ENCODE measurements at regions of chr4 and their contacts with region 1.

Region 1: DNA sequence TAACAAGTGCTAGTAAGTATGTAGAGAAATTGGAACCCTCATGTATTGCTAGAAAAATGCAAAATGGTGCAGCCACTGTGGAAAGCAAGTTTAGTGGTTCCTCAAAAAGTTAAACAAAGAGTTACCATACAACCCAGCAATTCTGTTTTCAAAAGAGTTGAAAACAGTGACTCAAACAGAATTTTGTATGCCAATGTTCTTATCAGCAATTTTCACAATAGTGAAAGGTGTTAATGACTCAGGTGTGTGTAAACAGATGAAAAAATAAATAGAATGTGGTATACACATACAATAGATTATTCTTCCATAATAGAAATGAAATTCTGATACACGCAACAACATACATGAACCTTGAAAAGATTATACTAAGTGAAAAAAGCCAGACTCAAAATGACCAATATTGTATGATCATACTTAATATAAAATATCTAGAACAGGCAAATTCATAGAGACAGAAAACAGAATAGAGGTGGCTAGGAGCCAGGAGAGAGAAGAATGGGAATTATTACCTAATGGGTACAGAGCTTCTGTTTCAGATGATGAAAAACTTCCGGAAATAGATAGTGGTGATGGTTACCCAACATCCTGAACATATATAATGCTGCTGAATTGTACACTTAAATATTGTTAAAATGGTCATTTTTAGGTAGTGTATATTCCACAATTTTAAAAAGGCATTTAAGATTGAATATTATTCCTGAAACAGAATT is 51.6 kb downstream of the WDFY3 start:
- H3K4me3 Mint-ChIP-seq: no peak overlapping the region
- H3K27ac Mint-ChIP-seq: no peak overlapping the region
- H3K4me1 Mint-ChIP-seq: peaks cover 34% of the 10 kb centered on the region
- H3K27me3 Mint-ChIP-seq: no peaks in the 10 kb centered on the region

Region 2: DNA sequence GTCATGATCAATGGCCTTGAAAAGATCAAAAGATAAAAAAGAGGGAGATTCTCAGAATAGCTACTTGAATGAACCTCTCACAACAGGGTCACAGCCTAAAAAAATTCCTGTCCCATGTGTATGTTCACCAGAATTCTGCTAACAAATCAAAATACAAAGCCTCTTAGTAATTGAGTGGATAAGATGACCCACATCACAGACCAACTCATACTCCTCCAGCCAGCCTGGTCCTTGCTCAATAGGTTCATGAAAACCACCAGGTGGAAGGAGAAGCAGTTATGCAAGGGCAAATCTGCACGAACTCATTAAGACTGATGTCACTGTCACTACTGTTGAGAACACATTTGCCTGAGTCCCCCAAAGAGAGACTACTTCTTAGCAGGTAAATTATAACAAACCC is 30.1 kb after region 1 on chr4:
- intact Hi-C with region 1: loop called (anchors 5 kb)
- H3K4me3 Mint-ChIP-seq: no peak overlapping the region
- H3K27ac Mint-ChIP-seq: no peak overlapping the region
- H3K4me1 Mint-ChIP-seq: peaks cover 24% of the 10 kb centered on the region
- H3K27me3 Mint-ChIP-seq: no peaks in the 10 kb centered on the region

Measured in dendritic cell treated with granulocyte-macrophage colony-stimulating factor and Interleukin-4, amounts not matched to agents 40 ng/mL and 50 ng/mL, for 4 days (primary cell).